ENCODE measurements at regions of chr4 and their contacts with region 1.

Region 1: GRCh38 chr4:140252742-140253555 is 99.0 kb upstream of the MAML3 start:
- DNase-seq: peak; percentile 65 to 97 (median 78)

Region 2: GRCh38 chr4:140012688-140013486 is 240.1 kb before region 1 on chr4:
- intact Hi-C with region 1: loop called (anchors 2 kb)
- DNase-seq: peak in 6 of 10 donors; percentile 15 to 85 (median 51)